Ascending aorta (tissue), 2 donors: ENCODE measurements at regions of chr13 and their contacts with region 1.

Region 1: GRCh38 chr13:77329133-77329910 is 2.4 kb upstream of the MYCBP2 start:
- DNase-seq: peak; percentile 60 to 93
- H3K4me3 ChIP-seq: peak overlapping the region; percentile 75 to 78
- H3K27ac ChIP-seq: peak overlapping the region; percentile 64 to 68
- H3K4me1 ChIP-seq: peaks cover 0 to 16% of the 10 kb centered on the region in 2 donors
- H3K27me3 ChIP-seq: no peaks in the 10 kb centered on the region
- CTCF ChIP-seq: no peak

Region 2: GRCh38 chr13:77026818-77027585 is 302.3 kb before region 1 on chr13 and contains the start of gene FBXL3:
- intact Hi-C with region 1: loop called (anchors 5 kb)
- DNase-seq: peak; percentile 36 to 91
- H3K4me3 ChIP-seq: peak within 1 kb of the TSS; percentile 88 to 100
- H3K27ac ChIP-seq: peak within 1 kb of the TSS; percentile 95 to 100
- H3K4me1 ChIP-seq: peaks cover 0 to 6% of the 10 kb centered on the region in 2 donors
- H3K27me3 ChIP-seq: no peaks in the 10 kb centered on the region
- CTCF ChIP-seq: no peak
- total RNA-seq, gene FBXL3: 102 TPM

Region 3: DNA sequence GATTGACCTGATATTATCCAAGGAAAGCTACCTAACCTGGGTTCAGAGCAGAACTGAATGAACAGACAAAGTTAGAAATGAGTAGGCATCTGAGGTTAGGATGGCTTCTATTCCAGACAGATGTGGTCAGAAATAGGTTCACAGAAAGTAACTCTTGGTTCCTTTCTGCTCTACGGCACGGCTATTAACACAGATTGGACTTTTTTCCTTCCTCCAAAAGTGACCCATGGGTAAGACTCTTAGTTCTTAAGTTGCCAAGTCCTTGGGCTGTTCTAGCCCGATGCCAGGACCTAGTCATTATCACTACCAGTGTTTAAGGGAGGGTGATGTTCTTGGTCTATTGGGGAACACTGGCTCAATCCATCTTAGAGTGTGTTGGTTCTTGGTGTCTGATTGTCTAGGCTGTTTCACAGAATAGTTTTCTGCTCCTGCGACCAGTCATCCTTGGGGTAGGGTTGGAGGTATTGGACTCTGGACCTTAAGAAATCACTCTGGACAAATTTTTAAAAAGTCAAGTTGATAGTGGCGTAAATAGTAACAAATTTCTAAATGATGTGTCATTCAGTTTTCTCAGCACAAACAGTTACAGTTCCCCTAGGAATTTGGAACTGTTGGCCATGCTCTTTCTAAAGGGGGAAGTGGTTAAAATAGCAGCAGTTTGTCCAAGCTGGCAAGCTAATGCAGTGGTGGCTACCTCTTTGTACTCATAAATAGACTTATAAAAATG is 57.7 kb after region 1 on chr13:
- intact Hi-C with region 1: loop called (anchors 1 kb)
- DNase-seq: peak in 1 of 2 donors; percentile 84
- H3K4me3 ChIP-seq: peak overlapping the region in 1 of 2 donors; percentile 21
- H3K27ac ChIP-seq: peak overlapping the region; percentile 73 to 89
- H3K4me1 ChIP-seq: peaks cover 5 to 18% of the 10 kb centered on the region in 2 donors
- H3K27me3 ChIP-seq: no peaks in the 10 kb centered on the region
- CTCF ChIP-seq: no peak

Region 4: GRCh38 chr13:77480066-77480465 is 150.7 kb after region 1 on chr13:
- intact Hi-C with region 1: loop called (anchors 1 kb)
- DNase-seq: no peak
- H3K4me3 ChIP-seq: no peak overlapping the region
- H3K27ac ChIP-seq: no peak overlapping the region
- H3K4me1 ChIP-seq: peaks cover 0 to 6% of the 10 kb centered on the region in 2 donors
- H3K27me3 ChIP-seq: no peaks in the 10 kb centered on the region
- CTCF ChIP-seq: no peak

Region 5: DNA sequence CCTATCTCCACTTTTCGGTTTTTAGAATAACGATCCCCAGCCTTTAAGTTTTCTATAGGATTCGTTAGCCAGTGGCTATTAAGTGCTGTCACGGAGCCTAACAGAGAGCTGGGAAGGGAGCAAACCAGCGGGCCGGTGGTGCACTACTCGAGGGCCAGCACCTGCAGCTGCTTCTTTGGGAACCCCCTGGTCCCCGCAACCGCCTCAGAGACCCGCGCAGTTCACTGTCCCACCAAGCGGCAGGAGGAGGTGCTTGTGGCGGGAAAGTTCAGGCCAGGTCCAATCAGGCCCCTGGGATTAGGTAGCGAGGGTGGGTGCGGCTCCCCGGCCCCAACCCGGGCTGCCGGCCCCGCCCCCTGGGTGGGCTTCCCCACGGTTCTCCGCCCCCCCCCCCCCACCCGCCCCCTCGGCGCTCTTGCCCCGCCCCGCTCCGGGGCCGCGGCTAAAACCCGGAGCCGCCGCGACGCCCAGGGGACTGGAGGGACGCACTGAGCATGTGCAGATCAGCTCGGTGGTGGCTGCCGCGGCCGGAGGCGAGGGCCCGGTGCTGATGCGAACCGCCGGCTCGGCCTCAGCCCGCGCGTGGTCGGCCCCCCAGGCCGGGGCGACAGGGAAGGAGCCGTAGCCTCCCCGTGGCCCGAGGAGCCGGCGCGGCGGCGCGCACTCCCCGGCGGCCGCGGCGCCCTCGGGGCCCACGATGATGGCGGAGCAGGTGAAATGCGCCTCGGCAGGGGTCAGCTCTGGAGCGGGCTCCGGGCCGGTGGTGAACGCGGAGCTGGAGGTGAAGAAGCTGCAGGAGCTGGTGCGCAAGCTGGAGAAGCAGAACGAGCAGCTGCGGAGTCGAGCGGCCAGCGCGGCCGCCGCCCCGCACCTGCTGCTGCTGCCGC is 368.1 kb after region 1 on chr13 and contains the start of gene SLAIN1:
- intact Hi-C with region 1: loop called (anchors 5 kb)
- DNase-seq: peak; percentile 38 to 90
- H3K4me3 ChIP-seq: peak within 1 kb of the TSS; percentile 90 to 99
- H3K27ac ChIP-seq: peak within 1 kb of the TSS; percentile 74 to 80
- H3K4me1 ChIP-seq: peaks cover 0 to 8% of the 10 kb centered on the region in 2 donors
- H3K27me3 ChIP-seq: no peaks in the 10 kb centered on the region
- CTCF ChIP-seq: no peak
- total RNA-seq, gene SLAIN1: 7.1 TPM